GM13977 (cell line): ENCODE measurements at regions of chr20 and their contacts with region 1.

Region 1: GRCh38 chr20:36605399-36606157 is at the start of gene RAB5IF:
- DNase-seq: peak; percentile 95
- CTCF ChIP-seq: peak; percentile 96

Region 2: DNA sequence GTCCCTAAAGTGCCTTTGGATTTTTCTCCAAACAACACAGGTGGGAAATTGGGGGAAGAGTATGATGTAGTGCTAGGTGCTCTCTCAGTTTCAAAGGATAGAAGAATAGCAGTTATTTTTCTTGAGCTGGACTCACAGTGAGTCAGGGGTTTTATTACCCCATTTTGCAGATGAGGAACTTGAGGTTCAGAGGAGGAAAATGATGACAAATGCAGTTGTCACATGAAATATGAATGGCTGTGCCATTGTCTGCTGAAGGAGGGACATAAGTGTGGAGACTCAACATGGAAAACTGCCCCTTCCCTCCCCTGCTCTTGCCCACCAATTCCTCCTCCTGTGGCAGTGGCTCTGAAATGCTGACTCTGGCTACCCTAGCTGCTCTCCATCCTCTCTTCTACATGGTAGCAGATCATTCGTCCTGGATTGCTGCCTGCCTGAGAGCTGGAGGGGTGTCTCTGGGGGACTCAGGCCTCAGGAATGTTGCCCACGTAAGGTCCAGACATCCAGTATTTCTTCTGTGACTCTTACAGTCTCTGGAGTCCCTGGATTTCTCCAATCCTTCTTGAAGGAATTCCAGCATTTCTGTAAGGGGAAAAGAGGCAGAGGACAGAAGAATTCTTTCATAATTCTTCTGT is 488.7 kb before region 1 on chr20:
- in situ Hi-C with region 1: no loop called
- DNase-seq: no peak
- CTCF ChIP-seq: no peak

Region 3: DNA sequence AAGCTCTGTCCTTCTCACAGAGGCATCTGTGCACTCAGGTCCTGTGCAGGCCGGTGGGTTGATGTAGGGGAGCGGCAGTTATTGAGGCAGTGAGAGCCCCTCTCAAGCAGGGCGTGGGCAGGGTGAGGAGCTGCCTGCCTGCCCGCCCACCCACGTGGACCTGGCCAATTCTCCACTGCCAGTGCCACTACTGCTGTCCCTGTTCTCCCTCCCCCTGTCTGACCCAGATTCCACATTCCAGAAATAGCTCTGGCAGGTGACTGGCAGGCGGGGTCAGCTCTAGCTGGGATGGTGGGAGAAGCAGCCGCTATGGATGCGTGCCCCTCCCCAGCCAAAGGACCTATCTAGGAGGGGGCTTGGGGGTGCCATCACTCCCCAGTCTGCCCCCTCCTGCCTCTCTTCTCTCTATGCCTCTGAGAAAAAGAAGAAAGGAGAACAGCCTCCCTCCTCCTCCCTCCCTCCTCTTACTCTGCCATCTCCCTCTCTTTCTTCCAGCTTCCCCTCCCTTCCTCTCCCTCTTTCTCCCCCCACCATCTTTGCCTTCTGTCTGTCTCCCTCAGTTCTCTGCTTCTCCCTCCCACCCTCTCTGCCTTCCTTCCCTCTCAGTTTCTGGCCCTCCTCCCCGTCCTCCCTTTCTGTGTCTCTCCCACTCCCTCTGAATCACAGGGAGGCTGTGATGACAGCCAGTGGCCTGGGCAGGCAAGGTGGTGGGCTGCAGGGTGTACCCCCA is 150.7 kb before region 1 on chr20:
- in situ Hi-C with region 1: loop called (anchors 10 kb)
- DNase-seq: no peak
- CTCF ChIP-seq: no peak

Region 4: GRCh38 chr20:36886859-36887751 is 281.5 kb after region 1 on chr20:
- in situ Hi-C with region 1: loop called (anchors 25 kb)
- DNase-seq: peak; percentile 88
- CTCF ChIP-seq: peak; percentile 93